HepG2 (cell line): ENCODE measurements at regions of chr2 and their contacts with region 1.

Region 1: GRCh38 chr2:19863303-19864041 is 38.3 kb downstream of the TTC32 start:
- DNase-seq: peak; percentile 76
- ATAC-seq: peak; percentile 96
- H3K4me3 ChIP-seq: peak overlapping the region; percentile 46 to 77 (median 57)
- H3K27ac ChIP-seq: peak overlapping the region; percentile 26
- H3K4me1 ChIP-seq: peaks cover 36% of the 10 kb centered on the region
- H3K27me3 ChIP-seq: peaks cover 2 to 18% of the 10 kb centered on the region in 2 experiments; a peak in 3 of 5 replicates
- CTCF ChIP-seq: peak; percentile 100
- EP300 ChIP-seq: no peak
- POLR2A ChIP-seq: peak in 1 of 2 experiments; percentile 60; a peak in 2 of 4 replicates
- RAD21 ChIP-seq: peak; percentile 100

Region 2: GRCh38 chr2:18387441-18388206 is 1475.8 kb before region 1 on chr2:
- CTCF ChIA-PET with region 1: interaction called, 8 read pairs
- POLR2A ChIA-PET with region 1: no interaction called
- in situ Hi-C with region 1: no loop called
- intact Hi-C with region 1: loop called (anchors 1 kb)
- DNase-seq: peak; percentile 71
- ATAC-seq: peak; percentile 97
- H3K4me3 ChIP-seq: peak overlapping the region in 1 of 3 experiments; percentile 43; a peak in 1 of 6 replicates
- H3K27ac ChIP-seq: no peak overlapping the region
- H3K4me1 ChIP-seq: 0 out of 2 replicates have a peak, but pooled peaks cover 8% of the 10 kb centered on the region
- H3K27me3 ChIP-seq: no peaks in the 10 kb centered on the region
- CTCF ChIP-seq: peak; percentile 88
- EP300 ChIP-seq: 0 out of 4 replicates have a peak, but pooled peaks of 1 of the 2 experiments have one; percentile 8
- POLR2A ChIP-seq: no peak
- RAD21 ChIP-seq: peak; percentile 57; the same call in 1 of the 2 replicates

Region 3: DNA sequence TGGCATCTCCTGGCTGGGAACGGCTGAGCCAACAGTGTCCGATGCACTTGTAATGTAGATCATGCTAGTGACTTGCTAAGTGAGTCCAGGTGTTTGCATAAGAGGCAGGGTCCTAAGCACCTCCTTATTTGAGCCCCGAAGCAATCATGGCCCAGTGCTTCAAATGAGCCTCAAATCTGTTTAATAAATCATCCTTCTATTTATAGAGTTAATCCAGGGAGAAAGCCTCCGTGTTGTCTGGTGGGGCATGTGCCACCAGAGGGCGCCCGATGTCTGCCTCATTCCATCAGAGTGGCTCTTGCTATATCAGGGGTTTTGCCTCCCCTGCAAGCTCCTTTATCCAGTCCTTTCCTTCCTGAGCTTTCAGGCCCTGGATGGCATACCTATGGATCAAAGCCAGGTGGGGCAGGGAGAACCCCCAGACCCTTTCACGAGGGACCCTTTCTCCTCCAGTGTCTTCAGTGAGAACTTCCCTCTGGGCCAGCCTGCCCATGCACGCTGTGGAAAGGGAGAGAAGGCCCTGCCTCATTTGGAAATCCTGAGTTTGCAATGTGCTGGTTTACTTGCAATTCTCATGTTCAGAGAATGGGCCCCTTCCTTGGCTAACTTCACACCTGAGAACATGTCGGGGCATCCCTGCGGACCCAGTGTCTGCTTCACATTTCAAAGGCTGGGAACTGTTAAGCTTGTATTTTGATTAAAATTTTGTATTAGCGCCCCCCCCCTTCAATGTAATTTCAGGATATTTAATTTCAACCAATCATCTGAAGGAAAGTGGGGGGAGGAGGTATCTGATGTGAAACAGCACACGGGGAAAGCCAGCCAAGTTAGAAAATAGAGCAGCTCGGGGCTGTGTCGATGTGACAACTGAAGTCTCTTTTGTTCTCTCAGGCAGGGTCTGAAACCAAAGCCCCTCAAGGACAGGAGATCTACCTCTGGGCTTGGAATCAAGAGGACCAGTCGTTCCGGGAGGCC is 1342.7 kb before region 1 on chr2:
- CTCF ChIA-PET with region 1: interaction called, 14 read pairs
- POLR2A ChIA-PET with region 1: no interaction called
- in situ Hi-C with region 1: loop called (anchors 5 kb)
- intact Hi-C with region 1: loop called (anchors 1 kb)
- DNase-seq: peak; percentile 71
- ATAC-seq: peak; percentile 96
- H3K4me3 ChIP-seq: no peak overlapping the region
- H3K27ac ChIP-seq: no peak overlapping the region
- H3K4me1 ChIP-seq: no peaks in the 10 kb centered on the region
- H3K27me3 ChIP-seq: peaks cover 2 to 11% of the 10 kb centered on the region in 2 experiments; a peak in 4 of 5 replicates
- CTCF ChIP-seq: peak; percentile 93
- EP300 ChIP-seq: no peak
- POLR2A ChIP-seq: no peak
- RAD21 ChIP-seq: peak; percentile 95

Region 4: DNA sequence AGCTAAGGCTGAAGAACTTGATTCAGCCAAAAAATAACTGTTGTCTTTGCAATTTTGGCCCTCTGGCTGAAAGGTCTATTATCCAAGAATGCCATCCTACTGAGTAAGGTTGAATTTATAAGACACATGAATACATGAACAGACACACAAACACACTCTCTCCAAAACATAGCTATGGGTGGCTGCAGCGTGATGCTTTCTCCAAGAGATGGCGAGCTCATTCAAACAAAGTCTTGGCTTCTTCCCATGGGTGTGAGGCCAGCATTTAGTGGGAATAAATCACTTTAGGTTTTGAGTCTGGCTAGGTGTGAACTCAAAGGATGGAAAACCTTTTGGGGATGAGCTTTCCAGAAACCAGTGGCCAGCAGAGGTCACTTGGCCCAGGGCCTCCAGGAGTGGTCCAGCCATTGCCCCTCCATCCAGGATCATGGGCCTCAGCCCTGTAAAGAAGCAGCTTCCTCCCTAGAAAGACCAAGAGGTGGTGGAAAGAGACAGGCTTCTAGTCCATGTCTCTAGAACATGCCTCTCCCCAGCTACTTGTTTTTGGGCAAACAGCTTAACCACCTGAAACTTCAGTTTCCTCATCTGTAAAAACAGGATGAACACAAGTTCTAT is 494.0 kb before region 1 on chr2:
- CTCF ChIA-PET with region 1: no interaction called
- POLR2A ChIA-PET with region 1: no interaction called
- in situ Hi-C with region 1: no loop called
- intact Hi-C with region 1: loop called (anchors 1 kb)
- DNase-seq: peak; percentile 23
- ATAC-seq: peak; percentile 70
- H3K4me3 ChIP-seq: no peak overlapping the region
- H3K27ac ChIP-seq: no peak overlapping the region
- H3K4me1 ChIP-seq: peaks cover 4% of the 10 kb centered on the region; the same call in 1 of the 2 replicates
- H3K27me3 ChIP-seq: peaks cover 1 to 32% of the 10 kb centered on the region in 2 experiments; a peak in 4 of 5 replicates
- CTCF ChIP-seq: peak; percentile 70
- EP300 ChIP-seq: no peak
- POLR2A ChIP-seq: no peak
- RAD21 ChIP-seq: no peak

Region 5: DNA sequence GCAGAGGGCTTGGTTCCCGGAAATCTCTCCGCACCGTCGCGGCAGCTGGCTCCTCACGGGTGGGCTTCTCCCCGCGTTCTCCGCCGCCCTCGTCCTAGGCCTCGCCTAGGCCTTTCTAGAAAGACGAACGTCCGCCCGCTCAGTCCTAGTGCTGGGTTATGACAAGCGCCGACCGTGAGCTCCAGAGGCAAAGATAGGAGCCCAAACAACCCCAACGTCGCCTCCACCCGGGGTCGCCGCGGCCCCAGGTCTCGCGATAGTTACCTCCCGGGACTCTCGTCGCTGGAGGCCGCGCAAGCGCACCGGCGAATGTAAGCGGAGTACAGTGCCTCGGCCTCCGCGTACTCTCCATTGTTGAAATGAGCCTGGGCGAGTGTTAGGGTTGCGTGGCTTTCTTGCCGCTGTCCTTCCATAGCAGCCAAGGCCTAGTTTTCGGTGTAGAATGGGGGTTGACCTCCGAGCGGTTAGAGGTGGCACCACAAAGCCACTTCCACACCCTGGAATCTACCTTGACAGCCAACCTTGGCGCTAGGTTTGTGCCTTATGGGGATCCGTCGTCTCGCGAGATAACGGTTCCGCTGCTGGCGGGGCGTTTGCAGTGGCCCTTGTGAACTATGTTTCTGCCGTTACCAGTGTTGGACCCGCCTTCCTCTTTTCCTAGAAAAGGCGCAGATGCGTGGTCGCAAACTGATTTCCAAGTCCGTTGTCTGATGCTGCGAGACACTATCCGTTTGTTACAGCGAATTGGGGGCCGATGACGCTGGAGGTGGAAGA is 38.2 kb after region 1 on chr2 and contains the start of gene TTC32:
- CTCF ChIA-PET with region 1: no interaction called
- POLR2A ChIA-PET with region 1: no interaction called
- in situ Hi-C with region 1: no loop called
- intact Hi-C with region 1: loop called (anchors 2 kb)
- DNase-seq: peak; percentile 95
- ATAC-seq: peak; percentile 95
- H3K4me3 ChIP-seq: peak within 1 kb of the TSS; percentile 87 to 89 (median 87)
- H3K27ac ChIP-seq: peak within 1 kb of the TSS; percentile 95
- H3K4me1 ChIP-seq: peaks cover 30% of the 10 kb centered on the region
- H3K27me3 ChIP-seq: no peaks in the 10 kb centered on the region; a peak in 1 of 5 replicates
- CTCF ChIP-seq: peak; percentile 64
- EP300 ChIP-seq: no peak
- POLR2A ChIP-seq: peak; percentile 86 to 97
- RAD21 ChIP-seq: no peak; the same call in 1 of the 2 replicates
- total RNA-seq, gene TTC32: 18.5 and 21.6 TPM in 2 replicates

Region 6: GRCh38 chr2:19933351-19933981 is 70.0 kb after region 1 on chr2:
- CTCF ChIA-PET with region 1: no interaction called
- POLR2A ChIA-PET with region 1: no interaction called
- in situ Hi-C with region 1: no loop called
- intact Hi-C with region 1: no loop called
- DNase-seq: peak; percentile 74
- ATAC-seq: peak; percentile 93
- H3K4me3 ChIP-seq: no peak overlapping the region
- H3K27ac ChIP-seq: peak overlapping the region; percentile 61
- H3K4me1 ChIP-seq: peaks cover 26% of the 10 kb centered on the region
- H3K27me3 ChIP-seq: no peaks in the 10 kb centered on the region
- CTCF ChIP-seq: no peak
- EP300 ChIP-seq: peak in 1 of 2 experiments; percentile 25; a peak in 1 of 4 replicates
- POLR2A ChIP-seq: no peak
- RAD21 ChIP-seq: no peak